ENCODE measurements at regions of chr1 and their contacts with region 1.

Region 1: GRCh38 chr1:197775282-197776262 is at the start of gene DENND1B:
- DNase-seq: peak; percentile 67 to 88 (median 79)
- ATAC-seq: peak; percentile 71 to 76 (median 75)
- H3K4me3 ChIP-seq: peak within 1 kb of the TSS; percentile 74 to 85
- H3K4me3 Mint-ChIP-seq: peak within 1 kb of the TSS; percentile 86 to 91 (median 89)
- H3K27ac ChIP-seq: peak within 1 kb of the TSS; percentile 85
- H3K27ac Mint-ChIP-seq: peak within 1 kb of the TSS; percentile 99 to 100
- H3K4me1 ChIP-seq: peaks cover 17 to 25% of the 10 kb centered on the region in 2 experiments
- H3K4me1 Mint-ChIP-seq: peaks cover 64 to 71% (median 71%) of the 10 kb centered on the region in 3 donors
- H3K27me3 ChIP-seq: no peaks in the 10 kb centered on the region
- H3K27me3 Mint-ChIP-seq: no peaks in the 10 kb centered on the region
- total RNA-seq, gene DENND1B: 13.6 to 29.8 (median 15.8) TPM

Region 2: GRCh38 chr1:197638316-197638715 is 137.3 kb before region 1 on chr1:
- CTCF ChIA-PET with region 1: no interaction called
- POLR2A ChIA-PET with region 1: no interaction called
- DNase-seq: no peak
- ATAC-seq: no peak
- H3K4me3 ChIP-seq: no peak overlapping the region
- H3K4me3 Mint-ChIP-seq: no peak overlapping the region
- H3K27ac ChIP-seq: no peak overlapping the region
- H3K27ac Mint-ChIP-seq: no peak overlapping the region
- H3K4me1 ChIP-seq: no peaks in the 10 kb centered on the region
- H3K4me1 Mint-ChIP-seq: peaks cover 0 to 5% (median 0%) of the 10 kb centered on the region in 3 donors
- H3K27me3 ChIP-seq: no peaks in the 10 kb centered on the region
- H3K27me3 Mint-ChIP-seq: no peaks in the 10 kb centered on the region

Region 3: GRCh38 chr1:199009447-199009846 is 1233.9 kb after region 1 on chr1:
- CTCF ChIA-PET with region 1: no interaction called
- POLR2A ChIA-PET with region 1: interaction called in 1 of 2 experiments, 10 read pairs
- DNase-seq: peak in 1 of 35 experiments; percentile 15
- ATAC-seq: peak in 1 of 4 experiments; percentile 50
- H3K4me3 ChIP-seq: no peak overlapping the region
- H3K4me3 Mint-ChIP-seq: peak overlapping the region in 2 of 3 donors; percentile 25 to 39
- H3K27ac ChIP-seq: no peak overlapping the region
- H3K27ac Mint-ChIP-seq: no peak overlapping the region
- H3K4me1 ChIP-seq: peaks cover 11 to 26% of the 10 kb centered on the region in 2 experiments
- H3K4me1 Mint-ChIP-seq: peaks cover 21 to 26% (median 26%) of the 10 kb centered on the region in 3 donors
- H3K27me3 ChIP-seq: no peaks in the 10 kb centered on the region
- H3K27me3 Mint-ChIP-seq: peaks cover 0 to 2% of the 10 kb centered on the region in 2 donors